ENCODE measurements at regions of chr5 and their contacts with region 1.

Region 1: DNA sequence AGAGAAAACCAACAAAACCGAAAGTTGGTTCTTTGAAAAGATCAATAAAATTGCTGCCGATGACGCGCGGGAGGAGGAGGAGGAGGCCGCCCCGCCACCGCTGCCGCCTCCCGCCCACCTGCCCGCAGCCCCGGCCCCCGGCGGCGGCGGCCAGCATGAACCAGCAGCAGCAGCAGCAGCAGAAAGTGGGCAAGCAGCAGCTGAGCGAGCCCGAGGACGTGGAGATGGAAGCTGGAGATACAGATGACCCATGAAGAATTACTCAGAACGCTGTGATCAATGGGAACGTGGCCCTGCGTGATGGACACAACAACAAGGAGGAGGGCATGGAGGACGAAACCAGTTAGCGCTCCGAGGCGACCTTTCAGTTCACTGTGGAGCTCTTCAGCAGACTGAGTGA is 53.9 kb upstream of the EFNA5 start:
- DNase-seq: no peak
- H3K4me3 ChIP-seq: no peak overlapping the region
- H3K27ac ChIP-seq: no peak overlapping the region
- H3K4me1 ChIP-seq: no peaks in the 10 kb centered on the region
- H3K27me3 ChIP-seq: no peaks in the 10 kb centered on the region
- CTCF ChIP-seq: no peak
- POLR2A ChIP-seq: no peak

Region 2: DNA sequence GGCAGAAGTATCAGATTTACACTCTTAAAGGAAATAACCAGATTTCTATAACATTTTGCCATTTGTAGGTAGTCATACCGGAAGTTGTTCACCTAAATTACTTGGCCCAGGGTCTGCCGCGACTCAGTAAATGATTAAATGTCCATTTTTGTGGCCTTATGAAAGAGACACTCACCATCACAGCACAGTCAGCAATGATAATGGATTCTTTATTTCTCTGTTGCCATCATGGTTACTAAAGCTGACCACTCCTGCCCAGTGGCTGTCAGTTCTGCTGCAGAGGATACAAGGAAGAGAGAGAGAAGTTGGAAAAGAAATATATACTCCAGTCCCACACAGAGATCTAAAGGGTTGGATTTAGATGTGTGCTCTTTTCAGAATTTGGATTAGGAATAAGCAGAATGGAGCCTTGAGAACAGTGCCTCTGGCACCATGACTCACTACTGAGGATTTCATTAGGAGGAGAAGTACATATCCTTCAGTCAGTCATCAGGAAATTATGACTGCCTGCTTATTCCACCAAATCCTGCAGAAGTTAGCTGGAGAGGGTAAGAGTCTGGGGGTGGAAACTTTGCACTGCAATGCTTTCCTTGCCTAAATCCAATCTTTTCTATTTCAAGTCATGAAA is 18.8 kb after region 1 on chr5:
- intact Hi-C with region 1: loop called (anchors 2 kb)
- DNase-seq: no peak
- H3K4me3 ChIP-seq: no peak overlapping the region
- H3K27ac ChIP-seq: no peak overlapping the region
- H3K4me1 ChIP-seq: no peaks in the 10 kb centered on the region
- H3K27me3 ChIP-seq: no peaks in the 10 kb centered on the region
- CTCF ChIP-seq: no peak
- POLR2A ChIP-seq: no peak